Activated naive CD4-positive, alpha-beta T cell treated with anti-CD3 and anti-CD28 coated beads for 36 hours (primary cell): ENCODE measurements at regions of chr4 and their contacts with region 1.

Region 1: DNA sequence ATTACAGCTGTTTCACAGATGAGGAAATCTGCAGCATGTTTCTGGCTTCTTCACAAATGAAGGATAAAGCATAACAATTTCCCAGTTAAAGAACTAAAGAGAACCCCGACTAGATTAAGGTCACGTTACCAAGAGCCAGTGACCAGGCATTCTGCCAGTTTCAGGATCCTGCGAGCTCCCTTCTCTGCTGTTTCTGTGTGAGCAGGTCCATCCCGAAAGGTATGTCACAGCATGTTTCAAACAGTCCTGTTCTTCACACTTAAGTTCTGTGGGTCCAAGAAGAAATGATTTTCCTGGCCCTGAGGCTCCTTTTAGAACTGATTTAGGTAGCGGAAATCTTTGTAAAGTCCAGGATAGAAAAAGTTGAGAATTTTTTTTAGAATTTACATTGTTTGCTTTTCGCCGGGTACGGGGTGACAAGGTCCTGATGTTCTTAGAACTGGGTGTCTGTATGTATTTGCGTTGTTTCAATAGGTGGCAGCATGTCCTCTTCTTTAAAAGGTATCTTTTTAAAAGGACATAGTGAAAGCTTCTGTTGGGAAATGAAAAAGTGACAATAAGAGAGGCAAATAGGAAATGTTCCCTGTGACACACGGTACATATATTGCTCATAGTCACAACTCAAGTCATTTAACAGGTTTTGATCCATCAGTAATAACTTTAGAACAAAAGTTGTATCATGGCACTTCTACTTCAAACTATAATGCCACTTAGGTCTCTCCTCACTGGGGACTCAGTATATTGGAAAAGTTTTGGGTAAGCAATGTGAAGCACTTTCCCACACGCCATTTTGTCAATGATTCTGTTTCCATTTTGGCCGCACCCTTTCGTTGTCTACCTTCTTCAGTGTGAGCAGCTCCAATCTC is 18.4 kb downstream of the IL21 start:
- DNase-seq: peak; percentile 44
- H3K4me3 Mint-ChIP-seq: peak overlapping the region; percentile 48
- H3K27ac Mint-ChIP-seq: peak overlapping the region; percentile 79
- H3K4me1 Mint-ChIP-seq: peaks cover 43% of the 10 kb centered on the region
- H3K27me3 Mint-ChIP-seq: no peaks in the 10 kb centered on the region

Region 2: DNA sequence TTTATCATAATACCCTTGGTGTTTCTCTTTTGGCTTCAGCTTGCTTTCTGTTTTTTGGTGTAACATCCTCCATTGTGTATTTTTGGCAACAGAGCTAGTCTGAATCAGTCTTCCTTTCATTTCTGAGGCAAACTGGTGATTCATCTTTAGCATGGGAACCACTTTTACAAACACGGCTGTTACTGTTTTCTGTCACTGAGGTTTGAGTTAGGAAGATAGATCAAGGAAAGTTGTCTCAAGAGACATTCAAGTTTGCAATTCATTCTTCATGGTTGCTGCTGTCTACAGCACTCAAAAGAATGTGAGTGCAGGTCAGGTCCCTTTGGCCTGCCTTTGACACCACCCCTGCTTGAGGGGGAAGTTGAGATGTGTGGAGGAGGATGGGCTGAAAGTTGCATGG is 18.0 kb before region 1 on chr4:
- CTCF ChIA-PET with region 1: interaction called, 29 read pairs
- intact Hi-C with region 1: loop called (anchors 1 kb)
- DNase-seq: peak; percentile 42
- H3K4me3 Mint-ChIP-seq: peak overlapping the region; percentile 50
- H3K27ac Mint-ChIP-seq: peak overlapping the region; percentile 100
- H3K4me1 Mint-ChIP-seq: peaks cover 65% of the 10 kb centered on the region
- H3K27me3 Mint-ChIP-seq: no peaks in the 10 kb centered on the region

Region 3: DNA sequence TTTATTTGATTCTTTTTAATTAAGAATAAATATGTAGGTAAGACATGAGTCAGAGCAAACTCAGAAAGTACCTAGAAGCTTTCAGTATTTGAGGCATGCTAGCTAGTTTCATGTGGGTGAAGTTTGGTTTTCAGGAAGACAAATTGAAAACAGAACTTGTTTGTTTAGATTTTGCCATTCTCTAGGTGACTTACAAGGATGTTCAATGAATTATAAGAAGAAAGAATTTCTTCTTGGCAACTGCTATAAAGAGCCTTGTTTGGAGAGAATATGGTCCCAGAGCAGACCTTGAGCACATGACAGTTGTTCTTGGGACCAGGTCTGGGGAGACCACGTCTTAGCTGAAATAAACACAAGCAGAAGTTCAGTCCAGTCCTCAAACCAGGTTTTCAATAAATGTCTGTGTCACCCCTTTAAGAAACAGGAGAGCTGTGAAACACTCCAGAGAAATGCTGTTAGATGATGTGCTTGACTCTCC is 56.3 kb after region 1 on chr4:
- CTCF ChIA-PET with region 1: interaction called, 29 read pairs
- intact Hi-C with region 1: loop called (anchors 5 kb)
- DNase-seq: no peak
- H3K4me3 Mint-ChIP-seq: peak overlapping the region; percentile 46
- H3K27ac Mint-ChIP-seq: peak overlapping the region; percentile 95
- H3K4me1 Mint-ChIP-seq: peaks cover 62% of the 10 kb centered on the region
- H3K27me3 Mint-ChIP-seq: no peaks in the 10 kb centered on the region

Region 4: GRCh38 chr4:122716825-122717448 is 114.4 kb after region 1 on chr4:
- CTCF ChIA-PET with region 1: interaction called, 92 read pairs
- intact Hi-C with region 1: loop called (anchors 1 kb)
- DNase-seq: peak; percentile 94
- H3K4me3 Mint-ChIP-seq: no peak overlapping the region
- H3K27ac Mint-ChIP-seq: peak overlapping the region; percentile 65
- H3K4me1 Mint-ChIP-seq: peaks cover 41% of the 10 kb centered on the region
- H3K27me3 Mint-ChIP-seq: no peaks in the 10 kb centered on the region

Region 5: DNA sequence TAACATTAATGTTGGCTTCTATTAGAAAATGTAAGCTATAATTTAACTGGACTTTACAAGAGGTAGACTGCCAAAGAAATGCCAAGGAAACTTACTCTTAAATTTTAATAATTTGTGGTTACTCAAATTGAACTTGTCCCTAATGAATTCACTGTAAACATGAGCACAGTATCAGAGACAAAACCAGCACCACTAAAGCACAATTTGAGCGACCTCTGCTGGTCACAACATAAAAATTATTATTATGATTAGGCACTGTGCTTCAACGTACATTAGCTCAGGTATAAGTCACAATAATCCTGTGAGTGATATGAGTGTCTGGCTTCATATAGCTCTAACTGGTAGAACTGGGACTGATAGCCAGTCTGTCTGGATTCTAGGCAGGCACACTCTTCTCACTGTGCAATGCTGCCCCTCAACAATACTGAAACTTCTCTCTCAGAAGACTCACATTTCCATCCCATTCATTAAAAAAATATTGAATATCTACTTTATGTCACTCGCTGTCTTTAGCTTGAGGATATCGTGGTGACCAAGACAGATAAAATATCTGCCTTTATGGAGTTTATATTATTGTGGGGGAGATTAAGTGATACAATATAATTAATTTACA is 311.9 kb after region 1 on chr4:
- CTCF ChIA-PET with region 1: interaction called, 3 read pairs
- intact Hi-C with region 1: loop called (anchors 2 kb)
- DNase-seq: no peak
- H3K4me3 Mint-ChIP-seq: no peak overlapping the region
- H3K27ac Mint-ChIP-seq: no peak overlapping the region
- H3K4me1 Mint-ChIP-seq: no peaks in the 10 kb centered on the region
- H3K27me3 Mint-ChIP-seq: no peaks in the 10 kb centered on the region

Region 6: GRCh38 chr4:123096038-123096437 is 493.5 kb after region 1 on chr4:
- CTCF ChIA-PET with region 1: no interaction called
- intact Hi-C with region 1: loop called (anchors 10 kb)
- DNase-seq: no peak
- H3K4me3 Mint-ChIP-seq: no peak overlapping the region
- H3K27ac Mint-ChIP-seq: no peak overlapping the region
- H3K4me1 Mint-ChIP-seq: no peaks in the 10 kb centered on the region
- H3K27me3 Mint-ChIP-seq: no peaks in the 10 kb centered on the region

Region 7: GRCh38 chr4:123144616-123145015 is 542.1 kb after region 1 on chr4:
- CTCF ChIA-PET with region 1: no interaction called
- intact Hi-C with region 1: no loop called
- DNase-seq: no peak
- H3K4me3 Mint-ChIP-seq: no peak overlapping the region
- H3K27ac Mint-ChIP-seq: no peak overlapping the region
- H3K4me1 Mint-ChIP-seq: no peaks in the 10 kb centered on the region
- H3K27me3 Mint-ChIP-seq: no peaks in the 10 kb centered on the region